Motor neuron (in vitro differentiated cells): ENCODE measurements at regions of chr2 and their contacts with region 1.

Region 1: GRCh38 chr2:15636972-15637785 is 45.5 kb downstream of the DDX1 start:
- ATAC-seq: peak; percentile 65 to 98 (median 96)
- H3K4me3 ChIP-seq: no peak overlapping the region
- H3K27ac ChIP-seq: no peak overlapping the region
- H3K4me1 ChIP-seq: peaks cover 4% of the 10 kb centered on the region in 2 donors

Region 2: DNA sequence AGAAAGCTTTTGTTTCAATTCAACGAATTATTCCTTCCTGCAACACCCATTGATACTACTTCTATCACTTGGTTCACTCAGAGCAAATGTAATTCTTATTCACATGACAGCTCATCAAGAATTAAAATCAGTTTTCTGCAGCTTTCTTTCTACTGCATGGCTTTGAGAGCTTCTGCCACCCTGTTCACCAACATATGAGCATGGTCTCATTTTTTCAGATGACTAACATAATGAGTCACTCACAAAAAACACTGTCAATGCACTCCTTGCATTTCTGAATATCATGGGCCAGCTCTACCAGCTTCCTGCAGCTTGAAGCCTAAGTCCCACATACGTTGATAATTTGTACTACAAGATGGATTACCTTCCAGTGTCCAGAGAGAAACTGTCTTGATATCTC is 661.8 kb before region 1 on chr2:
- in situ Hi-C with region 1: no loop called
- ATAC-seq: peak in 3 of 8 experiments; percentile 63 to 88 (median 70)
- H3K4me3 ChIP-seq: no peak overlapping the region
- H3K27ac ChIP-seq: no peak overlapping the region
- H3K4me1 ChIP-seq: no peaks in the 10 kb centered on the region

Region 3: DNA sequence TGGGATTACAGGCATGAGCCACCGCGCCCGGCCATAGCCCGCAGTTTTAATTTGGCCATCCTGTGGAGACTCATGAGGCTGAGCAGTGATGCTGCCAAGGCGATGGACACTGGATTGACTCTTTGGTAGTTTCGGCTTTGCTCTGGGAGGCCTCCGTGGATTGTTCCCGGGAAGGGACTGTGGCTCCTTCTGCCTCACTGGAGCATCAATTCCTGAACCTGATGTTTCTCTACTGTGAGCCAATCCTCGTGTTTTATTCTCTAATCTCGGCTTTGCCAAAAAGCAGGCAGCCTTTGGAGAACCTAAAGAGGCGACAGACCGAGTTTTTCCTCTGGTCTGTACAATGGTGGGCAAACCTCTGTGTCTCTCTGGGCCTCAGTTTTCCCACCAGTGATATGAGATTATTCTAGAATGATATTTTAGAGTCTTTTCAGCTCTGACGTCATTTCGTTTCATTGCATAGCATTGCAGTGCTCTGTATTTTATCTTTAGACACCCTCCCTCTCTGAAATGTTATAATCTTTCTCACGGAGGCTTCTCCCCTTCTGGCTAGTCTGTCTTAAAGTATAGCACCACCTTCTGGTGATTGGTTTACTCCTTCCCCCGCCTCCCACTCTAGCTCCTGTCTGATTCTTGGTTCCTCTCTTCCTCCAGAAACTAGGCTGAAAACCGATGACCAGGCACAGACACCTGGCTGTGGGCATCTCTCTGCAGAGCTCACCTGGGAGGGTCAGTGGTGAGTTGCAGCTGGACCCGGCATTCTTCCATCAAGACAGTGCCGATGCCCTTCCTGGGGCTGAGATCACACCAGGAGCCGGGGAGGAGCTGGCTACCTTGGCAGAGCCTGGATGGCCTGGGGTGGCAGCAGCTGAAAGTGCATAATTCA is 644.5 kb after region 1 on chr2:
- in situ Hi-C with region 1: loop called in 1 of 9 experiments (anchors 25 kb)
- ATAC-seq: peak; percentile 61 to 94 (median 84)
- H3K4me3 ChIP-seq: no peak overlapping the region
- H3K27ac ChIP-seq: no peak overlapping the region
- H3K4me1 ChIP-seq: no peaks in the 10 kb centered on the region

Region 4: DNA sequence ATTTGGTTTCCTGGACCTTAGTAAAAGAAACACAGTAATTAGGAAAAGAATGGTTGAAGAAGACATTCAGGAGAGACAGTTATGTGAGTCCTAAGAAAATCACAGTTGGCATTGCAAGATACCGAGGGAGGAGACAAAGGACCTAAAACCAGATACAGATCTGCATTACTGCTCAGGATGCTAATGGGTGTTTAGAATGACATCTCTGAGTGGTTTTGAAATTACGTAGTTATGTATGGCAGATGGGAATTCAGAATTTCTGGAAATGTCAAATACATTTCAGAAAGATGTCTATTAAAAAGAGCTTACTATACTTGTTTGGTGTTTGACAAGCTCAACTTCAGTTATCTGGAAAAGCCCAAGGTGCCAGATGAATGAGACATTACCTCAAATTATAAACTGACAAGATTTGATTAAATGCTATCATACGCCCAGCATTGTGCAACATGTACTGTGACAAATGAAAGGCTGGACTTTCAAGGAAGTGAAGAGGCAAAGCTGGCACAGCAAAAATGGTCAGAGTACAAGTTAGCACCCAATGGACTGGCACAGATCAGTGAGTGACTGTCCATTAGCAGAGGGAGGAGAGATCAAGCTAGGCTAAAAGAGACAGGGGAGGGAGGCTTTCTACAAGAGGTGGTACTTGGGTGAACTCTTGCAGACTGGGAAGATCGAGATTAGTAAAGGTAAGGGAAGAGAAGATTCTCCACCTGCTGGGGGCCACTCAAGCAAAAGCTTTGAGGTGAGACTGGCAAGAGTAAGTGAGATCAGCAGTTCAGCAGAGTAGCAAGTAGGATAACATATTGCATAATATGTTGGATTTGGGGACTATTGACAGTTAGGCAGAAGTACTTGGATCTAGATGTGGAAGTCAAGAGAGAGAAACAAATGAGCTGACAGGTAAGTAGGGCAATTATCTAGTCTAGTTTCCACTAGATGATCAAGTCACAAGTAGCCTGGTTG is 859.5 kb after region 1 on chr2:
- in situ Hi-C with region 1: loop called in 5 of 9 experiments (anchors 10 to 25 kb)
- ATAC-seq: no peak
- H3K4me3 ChIP-seq: no peak overlapping the region
- H3K27ac ChIP-seq: no peak overlapping the region
- H3K4me1 ChIP-seq: peaks cover 8 to 14% of the 10 kb centered on the region in 2 donors

Region 5: DNA sequence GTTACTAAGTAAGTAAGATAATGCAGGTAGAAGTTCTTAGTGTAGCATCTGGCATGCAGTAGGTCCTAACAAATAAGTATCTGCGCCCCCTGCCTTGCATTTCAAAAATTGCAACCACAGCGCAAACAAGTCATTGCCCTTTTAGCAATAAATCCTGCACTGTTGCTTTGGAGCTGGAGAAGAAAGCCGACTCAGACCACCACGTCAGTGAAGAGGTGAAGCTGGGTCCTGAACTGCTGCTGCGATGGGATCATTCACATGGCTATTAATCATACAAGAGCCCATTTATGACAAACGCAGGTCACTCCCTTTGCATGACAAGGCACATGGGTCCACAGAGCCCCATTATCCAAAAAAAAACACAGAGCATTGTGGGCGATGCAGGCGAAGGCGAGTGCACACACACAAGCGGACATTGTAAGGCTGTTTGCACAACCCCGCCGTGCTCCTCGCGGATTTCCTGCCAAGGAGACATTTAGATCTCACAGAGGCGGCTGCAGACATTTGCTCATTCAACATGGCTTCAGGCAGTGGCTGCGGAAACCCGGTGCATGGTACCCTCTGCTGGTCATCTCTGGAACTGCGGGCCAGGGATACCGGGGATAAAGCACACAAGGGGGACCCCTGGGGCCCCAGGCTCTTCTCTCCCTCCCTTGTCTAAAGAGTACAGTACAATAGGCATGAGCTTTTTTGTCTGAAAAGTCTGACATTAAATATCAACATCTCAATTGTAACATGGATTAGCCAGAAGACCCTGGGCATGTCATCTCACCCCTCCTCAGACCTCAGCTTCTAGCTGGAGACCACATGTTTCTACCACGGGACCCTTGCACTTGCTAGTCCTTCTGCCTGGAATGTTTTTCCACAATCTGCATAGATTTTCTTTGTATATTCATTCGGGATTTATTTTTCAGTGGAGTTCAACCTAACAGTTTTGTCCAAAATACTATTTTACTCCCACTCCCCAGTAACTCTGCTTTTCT is 971.8 kb after region 1 on chr2:
- in situ Hi-C with region 1: loop called in 2 of 9 experiments (anchors 25 kb)
- ATAC-seq: peak; percentile 82 to 92 (median 90)
- H3K4me3 ChIP-seq: peak overlapping the region; percentile 22 to 32 (median 30)
- H3K27ac ChIP-seq: peak overlapping the region; percentile 60 to 78
- H3K4me1 ChIP-seq: peaks cover 6 to 14% of the 10 kb centered on the region in 2 donors

Region 6: GRCh38 chr2:16756831-16757644 is 1119.9 kb after region 1 on chr2:
- in situ Hi-C with region 1: loop called in 2 of 9 experiments (anchors 25 kb)
- ATAC-seq: peak; percentile 90 to 100 (median 98)
- H3K4me3 ChIP-seq: no peak overlapping the region
- H3K27ac ChIP-seq: no peak overlapping the region
- H3K4me1 ChIP-seq: peaks cover 4% of the 10 kb centered on the region in 2 donors